ENCODE measurements at regions of chr3 and their contacts with region 1.

Region 1: DNA sequence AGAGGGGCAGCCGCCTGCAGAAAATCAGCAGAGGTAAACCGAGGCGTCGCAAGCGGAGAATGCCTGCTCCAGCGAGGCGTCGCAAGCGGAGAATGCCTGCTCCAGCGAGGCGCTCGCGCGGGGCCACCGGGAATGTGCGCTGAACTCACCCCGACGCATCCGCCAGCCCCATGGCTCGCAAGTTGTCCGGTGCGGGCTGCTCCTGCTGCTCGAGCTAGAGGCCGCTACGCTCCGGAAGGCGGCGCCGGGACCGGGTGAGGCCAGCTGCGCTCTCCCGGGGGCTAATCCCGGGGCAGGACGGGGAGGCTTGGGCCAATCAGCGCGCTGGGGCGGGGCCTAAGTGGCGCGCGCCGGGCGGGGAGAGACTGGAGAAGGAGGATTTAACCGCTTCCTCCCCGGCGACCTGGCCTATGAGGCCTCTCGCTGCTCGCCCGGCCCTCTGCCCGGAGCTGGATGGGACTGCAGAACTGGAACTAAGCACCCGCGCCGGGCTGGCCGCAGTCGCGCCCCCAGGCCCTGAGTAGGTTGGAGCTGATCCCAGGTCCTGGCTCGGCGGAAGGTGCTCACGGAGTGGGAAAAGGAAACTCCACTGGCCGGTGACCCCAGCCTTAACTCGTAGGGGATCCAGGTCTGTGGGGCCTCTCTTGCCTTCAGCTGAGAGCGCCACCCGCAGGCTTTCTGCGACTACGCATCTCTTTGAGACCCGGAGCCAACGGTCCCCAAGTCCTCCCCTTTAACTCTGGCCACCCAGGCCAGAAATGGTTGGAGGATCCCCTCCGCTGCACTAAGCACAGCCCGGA is at the start of gene SLC26A6:
- DNase-seq: peak; percentile 93
- ATAC-seq: peak; percentile 91
- H3K4me3 ChIP-seq: peak within 1 kb of the TSS; percentile 71 to 96 (median 93)
- H3K27ac ChIP-seq: peak within 1 kb of the TSS; percentile 74
- H3K4me1 ChIP-seq: peaks cover 64% of the 10 kb centered on the region
- H3K27me3 ChIP-seq: no peaks in the 10 kb centered on the region; a peak in 1 of 5 replicates
- CTCF ChIP-seq: peak; percentile 85
- EP300 ChIP-seq: peak in 1 of 2 experiments; percentile 8; a peak in 1 of 4 replicates
- POLR2A ChIP-seq: peak in 1 of 2 experiments; percentile 83; a peak in 2 of 4 replicates
- RAD21 ChIP-seq: peak; percentile 77
- total RNA-seq, gene SLC26A6: 10.3 and 40.7 TPM in 2 replicates

Region 2: DNA sequence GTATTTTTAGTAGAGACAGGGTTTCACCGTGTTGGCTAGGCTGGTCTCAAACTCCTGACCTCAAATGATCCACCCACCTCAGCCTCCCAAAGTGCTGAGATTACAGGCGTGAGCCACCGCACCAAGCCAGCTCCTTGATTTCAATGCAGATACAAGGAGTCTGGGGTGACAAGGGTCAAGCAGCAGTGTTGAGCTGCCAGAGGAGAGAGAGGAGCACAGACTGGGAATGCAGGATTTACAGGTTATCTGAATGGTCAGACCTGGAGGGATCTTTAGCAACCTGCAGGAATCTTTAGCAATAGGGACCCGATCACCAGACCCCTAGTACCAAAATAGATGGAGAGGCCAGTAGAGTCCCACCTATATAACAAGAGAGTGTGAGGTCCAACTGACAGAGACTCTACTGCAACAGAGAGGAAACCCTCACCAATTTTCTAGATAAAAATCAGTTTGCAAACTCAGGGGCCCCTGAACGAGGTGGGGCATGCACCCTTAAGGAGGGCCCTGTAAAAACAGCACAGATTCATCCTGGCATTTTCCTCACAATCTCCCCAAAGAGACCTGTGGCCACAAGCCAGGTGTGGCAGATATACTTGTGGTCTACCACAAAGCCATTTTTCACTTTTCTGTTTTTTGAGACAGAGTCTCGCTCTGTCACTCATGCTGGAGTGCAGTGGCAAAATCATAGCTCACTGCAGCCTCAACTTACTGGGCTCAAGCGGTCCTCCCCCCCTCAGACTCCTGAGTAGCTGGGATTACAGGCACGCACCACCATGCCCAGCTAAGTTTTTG is 120.8 kb before region 1 on chr3:
- CTCF ChIA-PET with region 1: no interaction called
- POLR2A ChIA-PET with region 1: no interaction called
- in situ Hi-C with region 1: no loop called
- intact Hi-C with region 1: no loop called
- DNase-seq: no peak
- ATAC-seq: no peak
- H3K4me3 ChIP-seq: no peak overlapping the region
- H3K27ac ChIP-seq: no peak overlapping the region
- H3K4me1 ChIP-seq: no peaks in the 10 kb centered on the region
- H3K27me3 ChIP-seq: no peaks in the 10 kb centered on the region; a peak in 1 of 5 replicates
- CTCF ChIP-seq: no peak
- EP300 ChIP-seq: no peak
- POLR2A ChIP-seq: no peak
- RAD21 ChIP-seq: no peak

Region 3: GRCh38 chr3:48598323-48599076 is 36.9 kb before region 1 on chr3:
- CTCF ChIA-PET with region 1: no interaction called
- POLR2A ChIA-PET with region 1: interaction called, 11 read pairs
- in situ Hi-C with region 1: no loop called
- intact Hi-C with region 1: no loop called
- DNase-seq: no peak
- ATAC-seq: no peak
- H3K4me3 ChIP-seq: no peak overlapping the region
- H3K27ac ChIP-seq: no peak overlapping the region
- H3K4me1 ChIP-seq: peaks cover 47% of the 10 kb centered on the region
- H3K27me3 ChIP-seq: no peaks in the 10 kb centered on the region
- CTCF ChIP-seq: no peak
- EP300 ChIP-seq: no peak
- POLR2A ChIP-seq: no peak
- RAD21 ChIP-seq: no peak

Region 4: GRCh38 chr3:48617559-48617958 is 17.9 kb before region 1 on chr3:
- CTCF ChIA-PET with region 1: no interaction called
- POLR2A ChIA-PET with region 1: interaction called, 140 read pairs
- in situ Hi-C with region 1: no loop called
- intact Hi-C with region 1: loop called (anchors 1 kb)
- DNase-seq: no peak
- ATAC-seq: no peak
- H3K4me3 ChIP-seq: no peak overlapping the region
- H3K27ac ChIP-seq: peak overlapping the region; percentile 97
- H3K4me1 ChIP-seq: peaks cover 85% of the 10 kb centered on the region
- H3K27me3 ChIP-seq: no peaks in the 10 kb centered on the region
- CTCF ChIP-seq: no peak
- EP300 ChIP-seq: no peak
- POLR2A ChIP-seq: no peak
- RAD21 ChIP-seq: no peak

Region 5: DNA sequence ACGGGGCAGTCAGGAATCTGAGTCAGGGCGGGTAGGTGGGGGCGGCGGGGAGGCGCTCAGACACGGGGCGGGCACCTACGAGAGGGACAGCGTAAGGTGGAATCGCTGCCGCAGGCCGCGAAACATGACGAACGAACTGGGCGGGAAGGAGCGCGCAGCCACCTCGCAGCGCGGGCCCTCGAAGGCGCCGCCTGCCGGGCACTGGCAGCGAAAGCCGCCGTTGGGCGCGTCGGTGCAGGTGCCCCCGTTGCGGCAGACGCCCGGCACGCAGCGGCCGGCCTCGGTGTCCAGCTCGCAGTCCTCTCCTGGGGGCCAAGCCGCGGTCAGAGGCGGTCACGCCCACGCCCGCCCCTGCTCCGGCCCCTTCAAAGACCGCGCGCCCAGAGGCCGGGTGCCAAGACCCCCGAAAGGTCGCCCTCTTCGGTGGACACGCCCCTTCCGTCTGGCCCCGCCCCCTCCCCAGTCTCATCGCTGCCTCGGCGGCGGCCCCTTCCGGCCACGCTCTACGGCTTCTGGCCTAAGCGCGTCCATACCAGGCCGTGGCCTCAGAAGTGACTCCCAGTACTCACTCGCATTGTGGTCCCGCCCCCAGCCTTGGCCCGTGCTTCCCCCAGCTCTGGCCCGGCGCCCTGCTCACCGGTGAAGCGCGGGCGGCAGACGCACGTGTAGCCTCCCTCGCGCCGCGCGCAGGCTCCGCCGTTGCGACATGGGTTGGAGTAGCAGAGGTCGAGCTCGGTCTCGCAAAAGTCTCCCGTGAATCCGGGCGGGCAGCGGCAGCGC is 20.8 kb after region 1 on chr3:
- CTCF ChIA-PET with region 1: no interaction called
- POLR2A ChIA-PET with region 1: interaction called, 40 read pairs
- in situ Hi-C with region 1: no loop called
- intact Hi-C with region 1: no loop called
- DNase-seq: peak; percentile 35
- ATAC-seq: peak; percentile 63
- H3K4me3 ChIP-seq: peak overlapping the region; percentile 39 to 56 (median 54); a peak in 4 of 6 replicates
- H3K27ac ChIP-seq: no peak overlapping the region
- H3K4me1 ChIP-seq: peaks cover 14% of the 10 kb centered on the region
- H3K27me3 ChIP-seq: no peaks in the 10 kb centered on the region
- CTCF ChIP-seq: peak; percentile 64
- EP300 ChIP-seq: no peak
- POLR2A ChIP-seq: no peak
- RAD21 ChIP-seq: peak; percentile 76